ENCODE measurements at regions of chr16 and their contacts with region 1.

Region 1: GRCh38 chr16:67109407-67110135 is at the start of gene PHAF1:
- DNase-seq: peak; percentile 75 to 96
- H3K4me3 ChIP-seq: peak within 1 kb of the TSS; percentile 79
- H3K27ac ChIP-seq: no peak within 1 kb of the TSS
- H3K4me1 ChIP-seq: peaks cover 38% of the 10 kb centered on the region
- H3K27me3 ChIP-seq: no peaks in the 10 kb centered on the region
- CTCF ChIP-seq: no peak
- total RNA-seq, gene PHAF1: 19.5 and 21.1 TPM in 2 replicates

Region 2: DNA sequence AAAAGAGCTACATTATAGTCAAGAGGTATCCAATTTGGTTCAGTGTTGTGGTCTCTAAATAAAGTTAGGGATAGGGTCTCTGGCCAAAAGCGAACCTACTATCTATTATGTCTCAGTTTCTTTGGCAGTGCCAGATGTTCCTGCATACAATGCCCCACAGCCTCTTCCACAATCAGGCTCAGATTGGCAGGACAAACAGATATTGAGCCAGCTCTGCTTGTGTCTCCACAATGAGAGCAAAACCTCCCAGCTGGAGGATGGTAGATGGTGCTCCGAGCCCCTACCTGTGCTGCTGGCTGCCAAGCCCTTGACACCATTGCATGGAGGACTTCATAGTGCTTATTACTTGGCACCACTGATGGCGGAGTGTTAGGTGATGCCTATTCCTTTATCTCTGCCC is 19.9 kb after region 1 on chr16:
- CTCF ChIA-PET with region 1: no interaction called
- POLR2A ChIA-PET with region 1: no interaction called
- intact Hi-C with region 1: no loop called
- DNase-seq: no peak
- H3K4me3 ChIP-seq: no peak overlapping the region
- H3K27ac ChIP-seq: no peak overlapping the region
- H3K4me1 ChIP-seq: no peaks in the 10 kb centered on the region
- H3K27me3 ChIP-seq: no peaks in the 10 kb centered on the region
- CTCF ChIP-seq: no peak

Region 3: DNA sequence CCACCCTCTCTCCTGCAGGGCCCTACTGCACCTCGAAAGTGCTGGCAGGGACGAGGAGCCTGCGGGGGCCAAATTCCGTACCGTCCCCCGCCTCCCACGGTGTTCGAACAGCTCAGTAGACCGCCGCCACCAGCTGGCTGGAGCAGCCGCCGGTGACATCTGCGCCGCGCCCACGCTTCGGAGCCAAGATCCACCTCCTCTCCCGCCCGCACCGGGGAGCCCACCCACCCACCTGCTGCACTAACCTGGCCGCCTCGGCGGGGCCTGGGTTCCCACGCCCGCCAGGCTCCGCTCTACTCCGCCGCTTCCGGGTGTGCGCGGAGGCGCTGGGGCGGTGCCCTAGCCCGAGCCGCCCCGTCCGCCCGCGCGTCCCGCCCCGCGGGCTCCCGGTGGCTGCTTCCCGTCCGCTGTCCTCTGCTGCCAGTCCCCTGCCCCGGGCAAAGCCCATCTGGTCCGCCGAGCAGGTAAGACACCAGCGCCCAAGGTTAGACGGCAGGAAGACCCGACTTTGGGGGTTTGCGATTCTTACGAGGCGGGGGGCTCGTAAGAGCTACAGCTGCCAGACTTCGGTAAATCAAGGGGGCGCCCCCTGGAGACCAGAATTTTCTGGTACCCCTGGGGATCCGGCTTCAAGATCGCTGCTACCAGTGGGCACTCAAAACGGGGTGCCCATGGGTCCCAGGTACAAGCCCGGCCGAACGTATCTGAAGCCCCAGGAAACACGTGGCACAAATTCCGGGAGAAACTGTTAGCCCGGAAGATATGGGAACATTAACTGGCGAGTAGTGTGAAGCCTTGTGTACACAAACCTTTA is 50.2 kb after region 1 on chr16 and contains the starts of genes FBXL8 and TRADD:
- CTCF ChIA-PET with region 1: no interaction called
- POLR2A ChIA-PET with region 1: no interaction called
- intact Hi-C with region 1: loop called (anchors 5 kb)
- DNase-seq: peak; percentile 57 to 85
- H3K4me3 ChIP-seq: peak within 1 kb of the TSS; percentile 66
- H3K27ac ChIP-seq: peak within 1 kb of the TSS; percentile 60
- H3K4me1 ChIP-seq: peaks cover 9% of the 10 kb centered on the region
- H3K27me3 ChIP-seq: no peaks in the 10 kb centered on the region
- CTCF ChIP-seq: peak; percentile 67; the same call in 1 of the 2 replicates
- total RNA-seq, gene FBXL8: 53.2 and 54.4 TPM in 2 replicates
- total RNA-seq, gene TRADD: 38.0 and 50.3 TPM in 2 replicates

Region 4: GRCh38 chr16:67173808-67174705 is 64.5 kb after region 1 on chr16:
- CTCF ChIA-PET with region 1: no interaction called
- POLR2A ChIA-PET with region 1: no interaction called
- intact Hi-C with region 1: no loop called
- DNase-seq: peak; percentile 85 to 93
- H3K4me3 ChIP-seq: peak overlapping the region; percentile 57
- H3K27ac ChIP-seq: peak overlapping the region; percentile 64
- H3K4me1 ChIP-seq: peaks cover 56% of the 10 kb centered on the region
- H3K27me3 ChIP-seq: no peaks in the 10 kb centered on the region
- CTCF ChIP-seq: no peak; the same call in 1 of the 2 replicates

Region 5: DNA sequence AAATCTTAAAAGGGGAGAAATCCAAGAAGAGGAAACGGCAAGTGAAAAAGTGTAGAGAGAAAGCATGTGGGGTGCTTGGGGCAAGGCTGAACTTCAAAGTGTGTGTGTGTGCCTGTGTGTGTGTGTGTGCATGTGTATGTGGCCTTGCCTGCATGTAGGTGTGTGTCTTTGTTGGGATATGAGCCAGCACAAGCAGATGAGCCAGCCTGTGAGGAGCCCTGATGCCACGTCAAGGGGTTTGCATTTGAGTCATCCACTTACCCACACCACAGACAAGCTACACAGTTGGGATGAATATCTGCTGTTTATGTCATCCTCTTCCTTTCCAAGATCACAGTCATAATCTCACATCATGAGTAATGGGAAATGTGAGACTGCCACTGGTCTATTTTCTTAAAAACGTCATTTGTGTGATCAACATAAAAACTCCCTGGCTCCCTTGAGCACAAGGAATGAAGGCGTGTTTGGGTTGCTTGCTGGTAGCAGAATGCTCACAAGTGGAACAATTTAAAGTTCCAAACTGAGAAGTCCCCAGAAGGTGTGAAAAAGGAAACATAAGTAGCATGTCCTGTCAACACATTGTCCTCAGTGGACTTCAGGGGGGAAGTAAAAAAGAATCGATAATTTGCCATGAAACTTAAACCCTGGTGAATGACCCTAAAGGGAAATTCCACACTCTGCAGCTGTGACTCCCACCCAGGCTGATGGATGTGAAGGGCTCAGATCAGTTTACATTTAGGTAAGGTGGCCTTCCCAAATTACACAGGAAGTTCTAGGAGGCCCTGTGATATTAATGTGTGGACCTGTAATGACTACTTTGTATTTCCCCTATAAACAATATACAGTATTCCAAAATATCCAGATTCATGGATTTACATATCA is 202.3 kb after region 1 on chr16:
- CTCF ChIA-PET with region 1: no interaction called
- POLR2A ChIA-PET with region 1: no interaction called
- intact Hi-C with region 1: no loop called
- DNase-seq: peak; percentile 51 to 95
- H3K4me3 ChIP-seq: no peak overlapping the region
- H3K27ac ChIP-seq: peak overlapping the region; percentile 70
- H3K4me1 ChIP-seq: peaks cover 23% of the 10 kb centered on the region
- H3K27me3 ChIP-seq: no peaks in the 10 kb centered on the region
- CTCF ChIP-seq: no peak

Measured in PC-9 (cell line).